ENCODE measurements at regions of chr2 and their contacts with region 1.

Region 1: GRCh38 chr2:207166039-207166348 is 246 bp upstream of the KLF7 start:
- DNase-seq: peak; percentile 90 to 97 (median 96)
- H3K4me3 ChIP-seq: peak overlapping the region; percentile 36 to 67
- H3K4me3 Mint-ChIP-seq: peak overlapping the region; percentile 89 to 99 (median 95)
- H3K27ac ChIP-seq: peak overlapping the region; percentile 97
- H3K27ac Mint-ChIP-seq: peak overlapping the region; percentile 91 to 98 (median 96)
- H3K4me1 ChIP-seq: peaks cover 40% of the 10 kb centered on the region
- H3K4me1 Mint-ChIP-seq: peaks cover 27 to 60% (median 40%) of the 10 kb centered on the region in 4 donors
- H3K27me3 ChIP-seq: no peaks in the 10 kb centered on the region
- H3K27me3 Mint-ChIP-seq: peaks cover 3 to 10% of the 10 kb centered on the region in 2 donors

Region 2: DNA sequence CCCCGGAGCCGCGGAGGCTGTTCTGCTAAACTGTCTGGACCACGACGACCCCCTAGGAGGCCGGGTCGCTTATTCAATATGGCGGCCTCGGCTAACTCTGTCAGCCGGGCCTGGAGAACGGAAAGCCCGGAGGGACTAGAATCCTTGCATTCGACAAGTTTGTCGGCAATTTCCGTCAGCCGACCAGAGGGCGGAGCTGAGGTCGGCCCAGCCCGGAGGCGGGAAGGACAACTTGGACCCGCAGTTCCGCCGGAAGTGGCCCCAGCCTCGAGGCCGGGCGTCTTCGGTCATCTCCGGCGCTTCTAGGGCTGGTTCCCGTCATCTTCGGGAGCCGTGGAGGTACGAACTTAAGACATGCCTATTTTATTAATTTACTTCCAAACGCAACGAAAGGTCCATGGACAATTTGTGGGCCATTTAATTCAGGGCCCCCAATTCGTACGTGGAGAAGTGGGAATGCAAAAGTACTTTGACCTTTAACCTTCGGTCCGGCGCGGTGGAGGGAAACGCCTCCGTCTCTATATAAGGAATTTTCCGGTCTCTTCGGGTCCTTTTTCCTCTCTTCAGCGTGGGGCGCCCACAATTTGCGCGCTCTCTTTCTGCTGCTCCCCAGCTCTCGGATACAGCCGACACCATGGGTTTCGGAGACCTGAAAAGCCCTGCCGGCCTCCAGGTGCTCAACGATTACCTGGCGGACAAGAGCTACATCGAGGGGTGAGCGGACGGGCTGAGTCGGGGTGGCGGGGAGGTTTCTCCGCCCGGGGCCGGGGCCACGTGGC is 1006.5 kb before region 1 on chr2 and contains the starts of genes EEF1B2 and NDUFS1:
- CTCF ChIA-PET with region 1: no interaction called
- POLR2A ChIA-PET with region 1: no interaction called
- intact Hi-C with region 1: loop called (anchors 5 kb)
- DNase-seq: peak; percentile 96 to 97 (median 97)
- H3K4me3 ChIP-seq: peak within 1 kb of the TSS; percentile 69 to 78
- H3K4me3 Mint-ChIP-seq: peak within 1 kb of the TSS; percentile 97 to 100 (median 100)
- H3K27ac ChIP-seq: peak within 1 kb of the TSS; percentile 94
- H3K27ac Mint-ChIP-seq: peak within 1 kb of the TSS; percentile 98 to 100 (median 99)
- H3K4me1 ChIP-seq: peaks cover 47% of the 10 kb centered on the region
- H3K4me1 Mint-ChIP-seq: peaks cover 38 to 71% (median 56%) of the 10 kb centered on the region in 4 donors
- H3K27me3 ChIP-seq: no peaks in the 10 kb centered on the region
- H3K27me3 Mint-ChIP-seq: no peaks in the 10 kb centered on the region
- total RNA-seq, gene EEF1B2: 947 to 1,026 TPM
- total RNA-seq, gene NDUFS1: 53.4 to 57.6 TPM

Region 3: DNA sequence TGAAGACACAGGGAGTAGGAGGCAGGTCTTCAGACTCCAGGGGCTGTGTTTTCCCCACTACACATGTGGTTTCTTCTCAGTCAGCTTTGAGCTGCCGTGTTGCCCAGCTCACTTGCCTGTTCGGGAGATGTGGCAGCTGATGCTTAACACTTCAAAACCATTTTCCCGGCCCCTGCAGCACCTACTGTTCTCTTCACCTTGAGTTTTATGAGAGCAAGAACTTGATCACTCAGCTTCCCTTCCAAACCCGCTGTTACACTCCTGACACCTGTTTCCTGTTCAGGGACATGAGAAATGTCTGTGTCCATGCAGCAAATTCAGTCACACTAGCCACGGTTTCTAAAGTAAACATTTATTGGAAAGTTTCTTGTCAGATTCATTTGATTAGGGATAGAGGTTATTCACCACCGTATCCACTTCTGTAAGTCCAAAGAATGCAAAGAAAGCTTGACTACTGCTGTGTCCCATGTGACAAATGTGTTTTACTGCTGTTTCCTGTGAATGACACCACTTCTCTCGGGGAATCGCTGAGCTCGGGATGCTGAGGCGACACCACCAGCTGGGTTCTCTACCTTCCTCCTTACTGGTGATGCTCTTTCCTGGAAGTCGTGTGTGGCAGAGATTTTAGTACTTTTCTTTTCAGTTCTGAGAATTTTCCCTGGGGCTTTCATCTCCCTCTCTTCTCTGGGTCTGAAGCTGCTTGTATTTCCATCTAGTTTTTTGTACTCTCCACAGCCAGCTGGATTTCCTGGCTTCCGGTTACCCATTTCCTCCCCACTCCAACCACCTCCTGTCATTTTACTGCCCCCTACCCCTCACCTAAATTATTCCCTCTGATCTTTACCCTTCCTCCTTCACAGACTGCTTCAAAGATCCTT is 92.0 kb before region 1 on chr2:
- CTCF ChIA-PET with region 1: interaction called, 3 read pairs
- POLR2A ChIA-PET with region 1: interaction called, 32 read pairs
- intact Hi-C with region 1: loop called (anchors 5 kb)
- DNase-seq: peak in 3 of 5 donors; percentile 1 to 14 (median 9)
- H3K4me3 ChIP-seq: no peak overlapping the region
- H3K4me3 Mint-ChIP-seq: peak overlapping the region; percentile 42 to 80 (median 54)
- H3K27ac ChIP-seq: no peak overlapping the region
- H3K27ac Mint-ChIP-seq: peak overlapping the region in 6 of 7 donors; percentile 9 to 84 (median 43)
- H3K4me1 ChIP-seq: peaks cover 17% of the 10 kb centered on the region
- H3K4me1 Mint-ChIP-seq: peaks cover 20 to 30% (median 22%) of the 10 kb centered on the region in 4 donors
- H3K27me3 ChIP-seq: no peaks in the 10 kb centered on the region
- H3K27me3 Mint-ChIP-seq: peaks cover 5% of the 10 kb centered on the region in 2 donors

Region 4: GRCh38 chr2:207143215-207144172 is 22.5 kb before region 1 on chr2:
- CTCF ChIA-PET with region 1: interaction called, 42 read pairs
- POLR2A ChIA-PET with region 1: interaction called, 298 read pairs
- intact Hi-C with region 1: loop called (anchors 1 kb)
- DNase-seq: peak; percentile 74 to 85 (median 77)
- H3K4me3 ChIP-seq: peak overlapping the region in 1 of 2 donors; percentile 15
- H3K4me3 Mint-ChIP-seq: peak overlapping the region; percentile 66 to 84 (median 74)
- H3K27ac ChIP-seq: peak overlapping the region; percentile 69
- H3K27ac Mint-ChIP-seq: peak overlapping the region; percentile 84 to 96 (median 93)
- H3K4me1 ChIP-seq: peaks cover 58% of the 10 kb centered on the region
- H3K4me1 Mint-ChIP-seq: peaks cover 48 to 81% (median 67%) of the 10 kb centered on the region in 4 donors
- H3K27me3 ChIP-seq: no peaks in the 10 kb centered on the region
- H3K27me3 Mint-ChIP-seq: no peaks in the 10 kb centered on the region

Region 5: GRCh38 chr2:207625018-207625907 is 459.3 kb after region 1 on chr2 and contains the start of gene METTL21A:
- CTCF ChIA-PET with region 1: no interaction called
- POLR2A ChIA-PET with region 1: interaction called, 11 read pairs
- intact Hi-C with region 1: loop called (anchors 2 kb)
- DNase-seq: peak; percentile 96 to 97 (median 97)
- H3K4me3 ChIP-seq: peak within 1 kb of the TSS; percentile 89 to 90
- H3K4me3 Mint-ChIP-seq: peak within 1 kb of the TSS; percentile 94 to 96 (median 95)
- H3K27ac ChIP-seq: peak within 1 kb of the TSS; percentile 97
- H3K27ac Mint-ChIP-seq: peak within 1 kb of the TSS; percentile 92 to 99 (median 97)
- H3K4me1 ChIP-seq: peaks cover 31% of the 10 kb centered on the region
- H3K4me1 Mint-ChIP-seq: peaks cover 16 to 46% (median 31%) of the 10 kb centered on the region in 4 donors
- H3K27me3 ChIP-seq: no peaks in the 10 kb centered on the region
- H3K27me3 Mint-ChIP-seq: no peaks in the 10 kb centered on the region
- total RNA-seq, gene METTL21A: 16.6 to 16.9 TPM

Region 6: GRCh38 chr2:207869784-207870778 is 704.1 kb after region 1 on chr2:
- CTCF ChIA-PET with region 1: no interaction called
- POLR2A ChIA-PET with region 1: no interaction called
- intact Hi-C with region 1: no loop called
- DNase-seq: no peak
- H3K4me3 ChIP-seq: no peak overlapping the region
- H3K4me3 Mint-ChIP-seq: no peak overlapping the region
- H3K27ac ChIP-seq: no peak overlapping the region
- H3K27ac Mint-ChIP-seq: no peak overlapping the region
- H3K4me1 ChIP-seq: no peaks in the 10 kb centered on the region
- H3K4me1 Mint-ChIP-seq: peaks cover 0 to 1% (median 0%) of the 10 kb centered on the region in 4 donors
- H3K27me3 ChIP-seq: no peaks in the 10 kb centered on the region
- H3K27me3 Mint-ChIP-seq: no peaks in the 10 kb centered on the region

Measured in CD4-positive, alpha-beta memory T cell (primary cell).